ENCODE measurements at regions of chr11 and their contacts with region 1.

Region 1: GRCh38 chr11:83071567-83072349 is at the start of gene RAB30:
- DNase-seq: peak; percentile 97
- ATAC-seq: peak; percentile 92
- H3K4me3 ChIP-seq: peak within 1 kb of the TSS; percentile 74 to 100 (median 94)
- H3K4me3 Mint-ChIP-seq: no peak within 1 kb of the TSS
- H3K27ac ChIP-seq: peak within 1 kb of the TSS; percentile 94
- H3K27ac Mint-ChIP-seq: no peak within 1 kb of the TSS
- H3K4me1 ChIP-seq: peaks cover 51 to 53% of the 10 kb centered on the region in 2 donors
- H3K4me1 Mint-ChIP-seq: peaks cover 54% of the 10 kb centered on the region
- H3K27me3 ChIP-seq: no peaks in the 10 kb centered on the region
- H3K27me3 Mint-ChIP-seq: no peaks in the 10 kb centered on the region
- CTCF ChIP-seq: no peak
- total RNA-seq, gene RAB30: 208 and 214 TPM in 2 replicates

Region 2: GRCh38 chr11:82996966-82997606 is 74.7 kb before region 1 on chr11:
- CTCF ChIA-PET with region 1: interaction called, 3 read pairs
- POLR2A ChIA-PET with region 1: interaction called, 5 read pairs
- intact Hi-C with region 1: loop called (anchors 5 kb)
- DNase-seq: peak; percentile 41
- ATAC-seq: peak; percentile 81
- H3K4me3 ChIP-seq: no peak overlapping the region
- H3K4me3 Mint-ChIP-seq: peak overlapping the region; percentile 81
- H3K27ac ChIP-seq: peak overlapping the region in 1 of 2 donors; percentile 28
- H3K27ac Mint-ChIP-seq: peak overlapping the region; percentile 85
- H3K4me1 ChIP-seq: peaks cover 57 to 66% of the 10 kb centered on the region in 2 donors
- H3K4me1 Mint-ChIP-seq: peaks cover 89% of the 10 kb centered on the region
- H3K27me3 ChIP-seq: no peaks in the 10 kb centered on the region
- H3K27me3 Mint-ChIP-seq: no peaks in the 10 kb centered on the region
- CTCF ChIP-seq: no peak

Region 3: GRCh38 chr11:83044958-83045712 is 26.6 kb before region 1 on chr11:
- CTCF ChIA-PET with region 1: no interaction called
- POLR2A ChIA-PET with region 1: interaction called, 11 read pairs
- intact Hi-C with region 1: no loop called
- DNase-seq: no peak
- ATAC-seq: peak; percentile 54
- H3K4me3 ChIP-seq: no peak overlapping the region
- H3K4me3 Mint-ChIP-seq: peak overlapping the region; percentile 59
- H3K27ac ChIP-seq: peak overlapping the region in 1 of 2 donors; percentile 49
- H3K27ac Mint-ChIP-seq: peak overlapping the region; percentile 63
- H3K4me1 ChIP-seq: peaks cover 69 to 76% of the 10 kb centered on the region in 2 donors
- H3K4me1 Mint-ChIP-seq: peaks cover 81% of the 10 kb centered on the region
- H3K27me3 ChIP-seq: no peaks in the 10 kb centered on the region
- H3K27me3 Mint-ChIP-seq: no peaks in the 10 kb centered on the region
- CTCF ChIP-seq: no peak

Region 4: GRCh38 chr11:83115551-83115950 is 43.8 kb after region 1 on chr11:
- CTCF ChIA-PET with region 1: interaction called, 6 read pairs
- POLR2A ChIA-PET with region 1: no interaction called
- intact Hi-C with region 1: loop called (anchors 1 kb)
- DNase-seq: no peak
- ATAC-seq: no peak
- H3K4me3 ChIP-seq: peak overlapping the region in 2 of 5 experiments; percentile 69 to 71
- H3K4me3 Mint-ChIP-seq: peak overlapping the region; percentile 75
- H3K27ac ChIP-seq: no peak overlapping the region
- H3K27ac Mint-ChIP-seq: peak overlapping the region; percentile 8
- H3K4me1 ChIP-seq: peaks cover 35 to 36% of the 10 kb centered on the region in 2 donors
- H3K4me1 Mint-ChIP-seq: peaks cover 44% of the 10 kb centered on the region
- H3K27me3 ChIP-seq: no peaks in the 10 kb centered on the region
- H3K27me3 Mint-ChIP-seq: no peaks in the 10 kb centered on the region
- CTCF ChIP-seq: no peak

Region 5: GRCh38 chr11:83193315-83194280 is 121.8 kb after region 1 on chr11 and contains the start of gene ANKRD42:
- CTCF ChIA-PET with region 1: no interaction called
- POLR2A ChIA-PET with region 1: no interaction called
- intact Hi-C with region 1: loop called (anchors 1 kb)
- DNase-seq: peak; percentile 95
- ATAC-seq: peak; percentile 72
- H3K4me3 ChIP-seq: peak within 1 kb of the TSS; percentile 58 to 99 (median 96)
- H3K4me3 Mint-ChIP-seq: peak within 1 kb of the TSS; percentile 98
- H3K27ac ChIP-seq: peak within 1 kb of the TSS; percentile 93 to 96
- H3K27ac Mint-ChIP-seq: peak within 1 kb of the TSS; percentile 97
- H3K4me1 ChIP-seq: peaks cover 22 to 29% of the 10 kb centered on the region in 2 donors
- H3K4me1 Mint-ChIP-seq: peaks cover 49% of the 10 kb centered on the region
- H3K27me3 ChIP-seq: no peaks in the 10 kb centered on the region
- H3K27me3 Mint-ChIP-seq: no peaks in the 10 kb centered on the region
- CTCF ChIP-seq: no peak
- total RNA-seq, gene ANKRD42: 13.3 and 14.5 TPM in 2 replicates

Measured in B cell (primary cell).